ENCODE measurements at regions of chr1 and their contacts with region 1.

Region 1: DNA sequence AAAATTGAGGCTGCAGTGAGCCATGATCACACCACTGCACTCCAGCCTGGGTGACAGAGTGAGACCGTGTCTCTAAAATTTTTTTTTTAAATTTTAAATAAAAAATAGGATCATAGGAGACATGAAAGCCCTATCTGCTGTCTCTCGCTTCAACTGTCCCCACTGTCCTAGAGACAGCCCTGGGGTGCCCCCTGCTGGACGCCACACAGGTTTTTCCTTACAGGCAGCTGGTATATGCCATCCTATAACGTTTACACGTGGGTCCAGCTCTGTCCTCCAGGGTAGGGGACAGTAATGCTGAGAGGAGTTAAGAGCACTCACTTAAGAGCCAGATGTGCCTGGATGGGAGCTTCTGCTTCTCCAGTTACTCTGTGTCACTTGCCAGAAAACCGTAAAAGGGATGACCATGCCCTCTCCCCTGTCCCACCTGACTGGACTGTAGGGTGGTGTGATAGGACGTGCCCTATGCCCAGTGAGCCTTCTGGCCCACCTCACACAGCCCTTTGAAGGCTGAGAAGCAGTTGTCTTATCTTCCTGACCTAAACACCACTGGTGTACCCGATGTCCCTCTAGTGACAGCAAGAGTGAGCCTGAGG is 8.5 kb downstream of the FBXO2 start:
- DNase-seq: peak; percentile 94
- H3K4me3 ChIP-seq: no peak overlapping the region
- H3K27ac ChIP-seq: no peak overlapping the region
- H3K4me1 ChIP-seq: peaks cover 0 to 28% (median 22%) of the 10 kb centered on the region in 6 donors
- H3K27me3 ChIP-seq: peaks cover 0 to 63% (median 12%) of the 10 kb centered on the region in 7 donors
- CTCF ChIP-seq: peak; percentile 34 to 87 (median 73)
- POLR2A ChIP-seq: no peak

Region 2: DNA sequence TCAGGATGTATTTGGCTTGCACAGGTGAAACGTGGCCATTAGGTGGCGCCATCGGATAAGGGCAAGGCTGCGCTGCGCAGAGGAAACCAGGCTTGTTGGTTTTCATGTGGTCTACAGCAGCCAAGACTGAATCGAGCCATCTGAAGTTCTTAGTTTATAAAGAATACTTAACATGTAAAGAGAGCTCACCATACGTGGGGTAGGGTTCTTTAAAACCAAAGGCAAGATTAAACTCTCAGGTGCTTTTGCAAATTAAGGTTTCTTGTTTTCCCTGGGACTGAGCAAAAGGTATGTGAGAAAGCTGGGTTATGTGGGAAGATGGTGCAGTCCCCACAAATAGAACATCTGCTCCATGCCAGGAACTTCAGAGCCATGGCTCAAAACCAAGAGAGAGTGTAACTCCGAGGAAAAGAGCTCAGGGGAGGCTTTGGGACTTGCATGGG is 608.0 kb before region 1 on chr1:
- intact Hi-C with region 1: loop called (anchors 5 kb)
- DNase-seq: peak; percentile 96
- H3K4me3 ChIP-seq: no peak overlapping the region
- H3K27ac ChIP-seq: no peak overlapping the region
- H3K4me1 ChIP-seq: peaks cover 0 to 8% (median 0%) of the 10 kb centered on the region in 6 donors
- H3K27me3 ChIP-seq: peaks cover 0 to 18% (median 0%) of the 10 kb centered on the region in 7 donors
- CTCF ChIP-seq: peak; percentile 91 to 95 (median 94)
- POLR2A ChIP-seq: no peak

Region 3: GRCh38 chr1:11248155-11248554 is 397.6 kb before region 1 on chr1:
- intact Hi-C with region 1: loop called (anchors 5 kb)
- DNase-seq: no peak
- H3K4me3 ChIP-seq: no peak overlapping the region
- H3K27ac ChIP-seq: no peak overlapping the region
- H3K4me1 ChIP-seq: peaks cover 0 to 13% (median 0%) of the 10 kb centered on the region in 6 donors
- H3K27me3 ChIP-seq: no peaks in the 10 kb centered on the region
- CTCF ChIP-seq: no peak
- POLR2A ChIP-seq: no peak

Region 4: DNA sequence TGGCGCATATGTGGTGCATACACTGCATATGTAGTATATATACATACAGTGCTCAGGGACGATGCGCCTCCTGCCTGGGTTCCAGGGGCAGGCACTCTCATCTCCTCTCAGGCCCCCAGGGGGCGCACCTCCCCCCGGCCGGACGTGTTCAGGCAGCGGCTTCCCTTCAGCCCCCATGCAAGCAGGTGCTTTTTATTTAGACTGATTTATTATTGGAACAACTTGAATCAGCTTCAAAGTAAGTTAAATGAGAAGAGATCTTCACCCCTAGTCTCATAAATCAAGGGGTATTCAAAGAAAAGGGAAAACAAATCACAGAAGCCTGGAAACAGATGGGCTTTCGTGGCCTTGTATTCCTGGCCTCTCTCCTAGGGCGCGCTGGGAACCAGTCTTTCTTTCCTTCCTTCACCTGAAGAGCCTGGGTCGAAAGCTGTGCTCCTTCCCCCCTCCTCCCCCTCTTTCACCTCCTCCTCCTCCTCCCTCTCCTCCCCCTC is 308.1 kb before region 1 on chr1:
- intact Hi-C with region 1: loop called (anchors 5 kb)
- DNase-seq: peak; percentile 87
- H3K4me3 ChIP-seq: no peak overlapping the region
- H3K27ac ChIP-seq: no peak overlapping the region
- H3K4me1 ChIP-seq: peaks cover 0 to 17% (median 5%) of the 10 kb centered on the region in 6 donors
- H3K27me3 ChIP-seq: peaks cover 0 to 57% (median 10%) of the 10 kb centered on the region in 7 donors
- CTCF ChIP-seq: peak; percentile 29 to 89 (median 79)
- POLR2A ChIP-seq: no peak

Region 5: DNA sequence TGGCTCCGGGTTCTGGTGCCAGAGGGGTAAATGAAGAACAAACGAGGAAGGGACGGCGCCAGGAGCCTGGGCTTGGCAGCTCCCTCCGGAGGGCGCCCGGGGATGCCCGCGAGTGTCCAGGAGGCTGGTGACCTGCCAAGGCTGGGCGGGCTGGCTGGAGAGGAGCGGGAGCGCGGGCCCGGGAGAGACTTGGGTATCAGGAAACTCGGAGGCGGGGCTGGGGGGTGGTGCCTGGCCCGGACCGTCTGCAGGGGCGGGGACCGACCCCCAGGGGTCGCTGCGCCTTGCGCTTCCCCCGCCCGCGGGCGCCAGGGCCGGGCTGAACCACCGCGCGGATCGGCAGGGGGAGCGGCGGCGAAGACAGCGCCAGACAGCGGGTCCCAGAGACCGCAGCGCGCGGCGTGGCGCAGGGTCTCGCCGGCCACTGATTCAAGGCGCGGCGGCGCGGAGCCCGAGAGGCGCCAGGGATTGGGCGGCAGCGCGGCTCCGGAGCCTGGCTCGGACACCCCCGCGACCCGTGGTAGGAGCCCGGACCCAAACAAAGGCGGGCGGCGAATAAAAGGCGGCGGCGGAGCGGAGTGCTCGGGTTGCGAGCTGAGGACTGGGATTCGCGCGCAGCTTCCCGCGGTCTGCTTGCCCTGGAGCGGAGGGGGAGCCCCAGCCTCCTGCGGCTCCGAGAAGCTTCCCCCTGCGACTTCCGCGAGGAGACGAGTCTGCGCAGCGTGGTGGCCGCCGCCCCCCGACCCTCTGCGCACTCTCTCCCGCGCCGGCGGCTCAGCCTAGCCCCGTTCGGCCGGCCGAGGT is 167.0 kb before region 1 on chr1 and contains the start of gene DISP3:
- intact Hi-C with region 1: loop called (anchors 10 kb)
- DNase-seq: peak; percentile 88
- H3K4me3 ChIP-seq: peak within 1 kb of the TSS; percentile 51 to 89 (median 67)
- H3K27ac ChIP-seq: peak within 1 kb of the TSS in 1 of 8 donors; percentile 37
- H3K4me1 ChIP-seq: peaks cover 6 to 22% (median 20%) of the 10 kb centered on the region in 6 donors
- H3K27me3 ChIP-seq: peaks cover 0 to 97% (median 42%) of the 10 kb centered on the region in 7 donors
- CTCF ChIP-seq: peak in 10 of 11 experiments; percentile 15 to 87 (median 76)
- POLR2A ChIP-seq: no peak
- total RNA-seq, gene DISP3: 0.32 to 0.69 (median 0.52) TPM

Region 6: DNA sequence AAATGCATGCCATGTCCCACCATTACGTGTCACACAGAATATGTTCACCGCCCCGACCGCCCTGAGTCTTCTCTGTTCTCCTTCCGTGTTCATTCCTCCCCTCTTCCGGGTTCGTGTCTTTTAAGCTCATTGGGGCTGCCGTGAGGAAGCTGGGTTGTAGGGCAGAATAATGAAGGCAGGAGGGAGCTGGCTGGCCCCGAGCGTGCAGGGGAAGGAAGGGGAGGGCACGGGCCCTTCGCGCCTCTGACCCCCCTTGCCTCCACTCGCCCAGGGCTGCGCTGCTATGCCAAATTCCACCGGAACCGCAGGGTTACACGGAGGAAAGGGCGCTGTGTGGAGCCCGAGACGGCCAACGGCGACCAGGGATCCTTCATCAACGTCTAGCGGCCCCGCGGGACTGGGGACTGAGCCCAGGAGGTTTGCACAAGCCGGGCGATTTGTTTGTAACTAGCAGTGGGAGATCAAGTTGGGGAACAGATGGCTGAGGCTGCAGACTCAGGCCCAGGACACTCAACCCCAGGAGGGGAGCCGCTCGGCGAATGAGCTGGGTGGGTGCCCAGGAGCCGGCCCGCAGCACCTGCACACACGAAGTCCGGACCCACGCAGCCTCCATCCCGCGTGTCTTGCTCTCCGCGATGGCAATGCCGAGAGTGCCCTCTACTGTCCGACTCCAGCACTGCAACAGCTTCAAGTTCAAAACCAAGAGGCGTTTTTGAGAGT is 73.7 kb after region 1 on chr1:
- intact Hi-C with region 1: loop called (anchors 5 kb)
- DNase-seq: peak; percentile 97
- H3K4me3 ChIP-seq: peak overlapping the region; percentile 42 to 79 (median 53)
- H3K27ac ChIP-seq: peak overlapping the region; percentile 81 to 94 (median 88)
- H3K4me1 ChIP-seq: peaks cover 10 to 32% (median 19%) of the 10 kb centered on the region in 6 donors
- H3K27me3 ChIP-seq: peaks cover 0 to 14% (median 0%) of the 10 kb centered on the region in 7 donors
- CTCF ChIP-seq: peak; percentile 91 to 99 (median 95)
- POLR2A ChIP-seq: no peak

Region 7: GRCh38 chr1:12067900-12068821 is 422.4 kb after region 1 on chr1:
- intact Hi-C with region 1: no loop called
- DNase-seq: no peak
- H3K4me3 ChIP-seq: peak overlapping the region in 1 of 8 donors; percentile 15
- H3K27ac ChIP-seq: peak overlapping the region in 7 of 8 donors; percentile 52 to 73 (median 68)
- H3K4me1 ChIP-seq: peaks cover 4 to 55% (median 24%) of the 10 kb centered on the region in 6 donors
- H3K27me3 ChIP-seq: peaks cover 6 to 88% (median 46%) of the 10 kb centered on the region in 7 donors
- CTCF ChIP-seq: no peak
- POLR2A ChIP-seq: no peak

Region 8: GRCh38 chr1:12124693-12125421 is 479.1 kb after region 1 on chr1:
- intact Hi-C with region 1: no loop called
- DNase-seq: peak; percentile 92
- H3K4me3 ChIP-seq: peak overlapping the region in 1 of 8 donors; percentile 21
- H3K27ac ChIP-seq: peak overlapping the region in 7 of 8 donors; percentile 37 to 88 (median 50)
- H3K4me1 ChIP-seq: peaks cover 15 to 42% (median 24%) of the 10 kb centered on the region in 6 donors
- H3K27me3 ChIP-seq: no peaks in the 10 kb centered on the region
- CTCF ChIP-seq: peak; percentile 88 to 99 (median 95)
- POLR2A ChIP-seq: no peak

Measured in spleen (tissue), 13 donors.